ENCODE measurements at regions of chr10 and their contacts with region 1.

Region 1: DNA sequence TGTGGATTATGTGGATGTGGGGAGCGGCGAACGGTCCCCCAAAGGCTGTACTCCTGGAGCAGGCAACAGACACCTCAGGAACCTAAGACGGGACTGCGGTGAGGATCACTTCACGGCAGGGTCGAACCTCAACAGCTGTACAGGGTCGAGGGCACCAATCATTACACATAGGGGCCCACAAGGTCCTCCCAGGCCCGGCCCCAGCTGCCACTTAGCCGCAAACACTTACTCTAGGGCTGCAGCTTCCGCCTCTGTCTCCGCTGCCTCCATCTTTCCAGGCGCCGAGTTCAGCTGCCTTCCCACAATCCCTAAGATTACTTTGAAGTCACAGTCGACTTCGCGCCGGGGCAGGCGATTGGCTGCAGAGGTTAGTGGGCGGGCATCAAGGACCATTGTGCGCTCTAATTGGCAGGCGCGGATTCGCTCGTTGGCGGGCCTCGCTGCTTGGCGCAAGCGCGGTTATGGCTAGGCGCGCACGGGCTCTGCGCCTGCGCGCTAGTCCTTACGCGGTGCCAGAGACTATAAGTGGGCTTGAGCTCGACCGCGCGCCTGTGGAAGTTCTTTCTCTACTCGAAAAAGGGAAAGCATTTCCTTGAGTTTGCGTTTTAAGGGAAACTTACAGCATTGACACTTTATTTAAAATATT is at the start of gene ZWINT:
- DNase-seq: peak; percentile 100
- ATAC-seq: peak; percentile 98
- H3K4me3 ChIP-seq: peak within 1 kb of the TSS; percentile 80
- H3K27ac ChIP-seq: peak within 1 kb of the TSS; percentile 6; the same call in 1 of the 2 replicates
- H3K4me1 ChIP-seq: peaks cover 39% of the 10 kb centered on the region
- H3K27me3 ChIP-seq: no peaks in the 10 kb centered on the region
- CTCF ChIP-seq: no peak
- total RNA-seq, gene ZWINT: 542 and 563 TPM in 2 replicates

Region 2: GRCh38 chr10:56537984-56538383 is 176.9 kb after region 1 on chr10:
- CTCF ChIA-PET with region 1: no interaction called
- POLR2A ChIA-PET with region 1: no interaction called
- intact Hi-C with region 1: loop called (anchors 5 kb)
- DNase-seq: peak; percentile 100
- ATAC-seq: peak; percentile 94
- H3K4me3 ChIP-seq: 0 out of 2 replicates have a peak overlapping the region, but pooled peaks have one; percentile 3
- H3K27ac ChIP-seq: peak overlapping the region; percentile 62
- H3K4me1 ChIP-seq: peaks cover 13% of the 10 kb centered on the region
- H3K27me3 ChIP-seq: no peaks in the 10 kb centered on the region
- CTCF ChIP-seq: no peak

Measured in PC-3 (cell line).